Heart right ventricle (tissue), 16 donors: ENCODE measurements at regions of chr17 and their contacts with region 1.

Region 1: GRCh38 chr17:80970044-80970761 is 21.4 kb upstream of the CHMP6 start:
- DNase-seq: peak; percentile 51 to 57
- ATAC-seq: peak; percentile 66 to 84 (median 76)
- H3K4me3 ChIP-seq: no peak overlapping the region
- H3K27ac ChIP-seq: peak overlapping the region in 1 of 10 donors; percentile 19
- H3K4me1 ChIP-seq: peaks cover 4 to 27% (median 20%) of the 10 kb centered on the region in 9 donors
- H3K27me3 ChIP-seq: peaks cover 0 to 42% (median 15%) of the 10 kb centered on the region in 7 donors
- CTCF ChIP-seq: peak in 8 of 9 donors; percentile 43 to 72 (median 62)

Region 2: GRCh38 chr17:80866147-80866793 is 103.9 kb before region 1 on chr17:
- intact Hi-C with region 1: loop called in 5 of 10 experiments (anchors 1 to 5 kb)
- DNase-seq: peak; percentile 63 to 75
- ATAC-seq: peak in 6 of 8 donors; percentile 54 to 80 (median 70)
- H3K4me3 ChIP-seq: no peak overlapping the region
- H3K27ac ChIP-seq: no peak overlapping the region
- H3K4me1 ChIP-seq: peaks cover 0 to 23% (median 3%) of the 10 kb centered on the region in 9 donors
- H3K27me3 ChIP-seq: no peaks in the 10 kb centered on the region
- CTCF ChIP-seq: peak; percentile 55 to 86 (median 77)